ENCODE measurements at regions of chr10 and their contacts with region 1.

Region 1: GRCh38 chr10:113958631-113959382 is 84.9 kb upstream of the ADRB1 start:
- DNase-seq: peak; percentile 75
- H3K4me3 Mint-ChIP-seq: no peak overlapping the region
- H3K27ac Mint-ChIP-seq: peak overlapping the region; percentile 4
- H3K4me1 Mint-ChIP-seq: peaks cover 38% of the 10 kb centered on the region
- H3K27me3 Mint-ChIP-seq: no peaks in the 10 kb centered on the region
- CTCF ChIP-seq: no peak

Region 2: GRCh38 chr10:113945075-113945686 is 13.6 kb before region 1 on chr10:
- CTCF ChIA-PET with region 1: no interaction called
- POLR2A ChIA-PET with region 1: no interaction called
- intact Hi-C with region 1: no loop called
- DNase-seq: peak; percentile 33
- H3K4me3 Mint-ChIP-seq: no peak overlapping the region
- H3K27ac Mint-ChIP-seq: peak overlapping the region; percentile 69
- H3K4me1 Mint-ChIP-seq: peaks cover 15% of the 10 kb centered on the region
- H3K27me3 Mint-ChIP-seq: no peaks in the 10 kb centered on the region
- CTCF ChIP-seq: no peak

Region 3: DNA sequence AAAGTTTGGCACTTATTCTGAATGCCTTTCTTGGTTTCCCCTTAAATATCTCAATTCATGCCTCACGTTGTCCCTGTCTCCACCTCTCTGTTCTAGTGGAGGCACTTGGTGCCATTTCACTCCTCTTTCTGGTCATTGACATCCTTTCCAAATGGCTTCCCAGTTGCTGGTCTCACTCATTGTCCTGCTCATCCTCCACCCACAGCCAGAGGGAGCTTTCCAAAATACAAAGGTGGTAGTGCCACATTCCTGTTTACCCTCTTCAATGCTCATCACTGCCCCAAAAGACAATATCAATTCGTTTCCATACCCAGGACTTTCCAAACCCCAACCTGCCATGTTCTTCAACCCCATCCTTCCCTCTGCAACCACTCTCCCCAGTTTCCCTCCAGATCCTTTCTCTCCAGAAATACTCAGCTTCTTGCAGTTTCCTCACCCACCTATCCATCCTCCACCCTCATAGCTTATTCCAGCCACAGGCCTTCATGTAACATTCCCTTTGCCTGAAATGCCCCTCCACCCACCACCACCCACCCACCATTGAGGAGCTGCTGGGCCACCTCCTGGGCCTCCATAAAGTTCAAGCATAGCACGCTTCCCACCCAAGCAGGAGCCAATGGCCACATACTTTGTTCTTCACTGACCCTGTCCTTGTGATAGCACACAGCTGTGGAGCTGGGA is 21.7 kb after region 1 on chr10:
- CTCF ChIA-PET with region 1: no interaction called
- POLR2A ChIA-PET with region 1: no interaction called
- intact Hi-C with region 1: no loop called
- DNase-seq: peak; percentile 29
- H3K4me3 Mint-ChIP-seq: no peak overlapping the region
- H3K27ac Mint-ChIP-seq: no peak overlapping the region
- H3K4me1 Mint-ChIP-seq: no peaks in the 10 kb centered on the region
- H3K27me3 Mint-ChIP-seq: no peaks in the 10 kb centered on the region
- CTCF ChIP-seq: no peak

Region 4: DNA sequence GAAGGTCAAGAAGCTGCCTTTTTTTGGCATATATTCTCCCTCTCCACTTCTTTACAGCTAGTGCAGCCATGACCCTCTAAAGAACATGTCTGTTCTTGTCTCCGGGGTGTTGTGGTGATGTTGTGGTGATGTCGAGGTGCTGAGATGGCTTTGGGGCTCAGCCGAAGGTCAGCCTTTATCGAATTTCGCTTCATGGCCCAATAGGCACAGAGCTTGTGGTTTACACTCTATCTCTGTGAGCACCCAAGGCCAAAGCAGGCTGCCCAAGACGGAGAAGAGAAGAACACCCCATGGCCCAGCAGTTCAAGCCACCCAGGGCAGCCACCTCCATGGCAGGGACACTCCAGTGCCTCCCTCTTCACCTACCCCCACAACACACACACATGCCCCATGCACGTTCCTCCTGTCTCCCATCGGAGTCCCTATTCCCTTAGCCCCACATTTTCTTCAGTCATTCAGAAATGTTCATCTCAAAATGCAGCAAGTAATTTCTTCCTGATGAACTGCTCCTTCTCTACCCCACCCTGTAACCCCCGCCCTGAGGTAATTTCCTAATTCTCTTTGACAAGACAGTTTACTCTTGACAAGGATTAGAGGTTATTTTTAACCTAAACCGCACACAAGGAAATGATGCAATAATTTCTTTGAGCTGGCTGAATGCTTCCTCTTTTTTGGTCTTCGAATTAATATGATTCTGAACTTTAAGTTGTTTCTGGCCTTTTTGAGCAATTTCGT is 66.2 kb after region 1 on chr10:
- CTCF ChIA-PET with region 1: no interaction called
- POLR2A ChIA-PET with region 1: no interaction called
- intact Hi-C with region 1: loop called (anchors 10 kb)
- DNase-seq: peak; percentile 73
- H3K4me3 Mint-ChIP-seq: no peak overlapping the region
- H3K27ac Mint-ChIP-seq: peak overlapping the region; percentile 87
- H3K4me1 Mint-ChIP-seq: peaks cover 41% of the 10 kb centered on the region
- H3K27me3 Mint-ChIP-seq: no peaks in the 10 kb centered on the region
- CTCF ChIP-seq: no peak

Region 5: GRCh38 chr10:115209133-115209532 is 1250.3 kb after region 1 on chr10:
- CTCF ChIA-PET with region 1: no interaction called
- POLR2A ChIA-PET with region 1: no interaction called
- intact Hi-C with region 1: no loop called
- DNase-seq: no peak
- H3K4me3 Mint-ChIP-seq: no peak overlapping the region
- H3K27ac Mint-ChIP-seq: no peak overlapping the region
- H3K4me1 Mint-ChIP-seq: peaks cover 5% of the 10 kb centered on the region
- H3K27me3 Mint-ChIP-seq: peaks cover 60% of the 10 kb centered on the region
- CTCF ChIP-seq: no peak